ENCODE measurements at regions of chr12 and their contacts with region 1.

Region 1: GRCh38 chr12:49673446-49674317 is 33.5 kb downstream of the FMNL3 start:
- DNase-seq: no peak
- ATAC-seq: no peak
- H3K4me3 ChIP-seq: no peak overlapping the region
- H3K4me3 Mint-ChIP-seq: peak overlapping the region; percentile 34
- H3K27ac ChIP-seq: peak overlapping the region; percentile 92 to 95
- H3K27ac Mint-ChIP-seq: peak overlapping the region; percentile 87
- H3K4me1 ChIP-seq: peaks cover 64 to 67% of the 10 kb centered on the region in 2 donors
- H3K4me1 Mint-ChIP-seq: peaks cover 84% of the 10 kb centered on the region
- H3K27me3 ChIP-seq: no peaks in the 10 kb centered on the region
- H3K27me3 Mint-ChIP-seq: no peaks in the 10 kb centered on the region
- CTCF ChIP-seq: no peak

Region 2: GRCh38 chr12:49662998-49663843 is 10.5 kb before region 1 on chr12:
- CTCF ChIA-PET with region 1: interaction called, 43 read pairs
- POLR2A ChIA-PET with region 1: interaction called, 5 read pairs
- intact Hi-C with region 1: loop called (anchors 1 kb)
- DNase-seq: peak; percentile 84
- ATAC-seq: peak; percentile 89
- H3K4me3 ChIP-seq: peak overlapping the region; percentile 0 to 65 (median 36)
- H3K4me3 Mint-ChIP-seq: peak overlapping the region; percentile 85
- H3K27ac ChIP-seq: peak overlapping the region; percentile 78 to 95
- H3K27ac Mint-ChIP-seq: peak overlapping the region; percentile 97
- H3K4me1 ChIP-seq: peaks cover 77 to 86% of the 10 kb centered on the region in 2 donors
- H3K4me1 Mint-ChIP-seq: peaks cover 82% of the 10 kb centered on the region
- H3K27me3 ChIP-seq: no peaks in the 10 kb centered on the region
- H3K27me3 Mint-ChIP-seq: no peaks in the 10 kb centered on the region
- CTCF ChIP-seq: no peak

Region 3: GRCh38 chr12:49687941-49688340 is 14.3 kb after region 1 on chr12:
- CTCF ChIA-PET with region 1: interaction called, 10 read pairs
- POLR2A ChIA-PET with region 1: interaction called, 3 read pairs
- intact Hi-C with region 1: loop called (anchors 2 kb)
- DNase-seq: no peak
- ATAC-seq: no peak
- H3K4me3 ChIP-seq: no peak overlapping the region
- H3K4me3 Mint-ChIP-seq: no peak overlapping the region
- H3K27ac ChIP-seq: no peak overlapping the region
- H3K27ac Mint-ChIP-seq: no peak overlapping the region
- H3K4me1 ChIP-seq: peaks cover 51% of the 10 kb centered on the region in 2 donors
- H3K4me1 Mint-ChIP-seq: peaks cover 65% of the 10 kb centered on the region
- H3K27me3 ChIP-seq: no peaks in the 10 kb centered on the region
- H3K27me3 Mint-ChIP-seq: no peaks in the 10 kb centered on the region
- CTCF ChIP-seq: no peak

Measured in B cell (primary cell).